ENCODE measurements at regions of chr10 and their contacts with region 1.

Region 1: GRCh38 chr10:25080880-25081581 is 64.6 kb downstream of the THNSL1 start:
- DNase-seq: peak; percentile 59
- H3K4me3 ChIP-seq: no peak overlapping the region
- H3K27ac ChIP-seq: no peak overlapping the region
- H3K27me3 ChIP-seq: no peaks in the 10 kb centered on the region
- CTCF ChIP-seq: peak; percentile 98

Region 2: DNA sequence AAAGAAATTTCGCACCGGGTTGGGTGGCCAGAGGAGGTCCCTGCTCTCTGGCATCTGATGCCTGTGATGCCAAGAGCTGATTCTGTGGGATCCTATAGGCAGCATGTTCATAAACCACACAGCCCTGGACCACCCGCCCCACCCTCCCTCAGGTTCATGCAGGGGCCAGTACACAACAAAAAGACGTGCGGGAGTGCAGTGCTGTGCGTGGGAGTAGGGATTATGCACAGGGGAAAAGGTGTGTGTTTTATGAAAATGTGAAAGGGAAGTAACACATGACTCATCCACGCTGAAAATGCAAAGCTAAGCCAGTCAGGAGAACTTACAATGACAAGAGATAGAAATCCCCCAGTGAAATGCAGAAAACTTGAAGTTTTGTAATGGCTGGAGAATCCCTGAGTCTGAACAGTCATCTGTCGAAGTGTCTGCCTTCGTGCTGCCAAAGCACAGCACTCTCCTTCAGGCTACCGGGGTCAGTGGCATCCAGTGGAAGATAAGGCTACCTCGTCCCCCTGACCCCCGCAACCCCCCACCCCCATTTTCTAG is 871.0 kb before region 1 on chr10:
- CTCF ChIA-PET with region 1: no interaction called
- POLR2A ChIA-PET with region 1: no interaction called
- DNase-seq: no peak
- H3K4me3 ChIP-seq: peak overlapping the region; percentile 59
- H3K27ac ChIP-seq: no peak overlapping the region
- H3K27me3 ChIP-seq: no peaks in the 10 kb centered on the region
- CTCF ChIP-seq: no peak

Region 3: GRCh38 chr10:24589265-24589664 is 491.8 kb before region 1 on chr10:
- CTCF ChIA-PET with region 1: interaction called, 10 read pairs
- POLR2A ChIA-PET with region 1: no interaction called
- DNase-seq: no peak
- H3K4me3 ChIP-seq: no peak overlapping the region
- H3K27ac ChIP-seq: no peak overlapping the region
- H3K27me3 ChIP-seq: no peaks in the 10 kb centered on the region
- CTCF ChIP-seq: no peak

Region 4: GRCh38 chr10:24603333-24603732 is 477.7 kb before region 1 on chr10:
- CTCF ChIA-PET with region 1: interaction called, 19 read pairs
- POLR2A ChIA-PET with region 1: no interaction called
- DNase-seq: no peak
- H3K4me3 ChIP-seq: no peak overlapping the region
- H3K27ac ChIP-seq: no peak overlapping the region
- H3K27me3 ChIP-seq: no peaks in the 10 kb centered on the region
- CTCF ChIP-seq: no peak

Region 5: GRCh38 chr10:24642622-24643417 is 438.2 kb before region 1 on chr10:
- CTCF ChIA-PET with region 1: interaction called, 47 read pairs
- POLR2A ChIA-PET with region 1: no interaction called
- DNase-seq: peak; percentile 61
- H3K4me3 ChIP-seq: no peak overlapping the region
- H3K27ac ChIP-seq: no peak overlapping the region
- H3K27me3 ChIP-seq: no peaks in the 10 kb centered on the region
- CTCF ChIP-seq: peak; percentile 79

Region 6: GRCh38 chr10:24685958-24686540 is 395.0 kb before region 1 on chr10:
- CTCF ChIA-PET with region 1: interaction called, 10 read pairs
- POLR2A ChIA-PET with region 1: no interaction called
- DNase-seq: peak; percentile 38
- H3K4me3 ChIP-seq: no peak overlapping the region
- H3K27ac ChIP-seq: no peak overlapping the region
- H3K27me3 ChIP-seq: no peaks in the 10 kb centered on the region
- CTCF ChIP-seq: no peak

Region 7: DNA sequence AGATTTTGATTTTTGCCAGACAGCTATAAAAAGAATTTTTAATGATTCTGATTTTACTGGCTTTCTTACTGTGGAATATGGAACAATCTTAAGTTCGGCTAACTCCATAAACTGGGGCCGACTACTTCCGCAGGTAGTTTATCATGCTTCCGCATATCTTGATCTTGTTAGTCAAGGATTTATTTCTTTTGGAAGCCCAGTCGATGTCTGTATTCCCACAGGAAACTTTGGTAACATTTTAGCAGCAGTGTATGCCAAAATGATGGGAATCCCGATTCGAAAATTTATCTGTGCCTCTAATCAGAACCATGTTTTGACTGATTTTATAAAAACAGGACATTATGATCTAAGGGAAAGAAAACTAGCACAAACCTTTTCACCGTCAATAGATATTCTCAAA is 56.5 kb before region 1 on chr10:
- CTCF ChIA-PET with region 1: interaction called, 12 read pairs
- POLR2A ChIA-PET with region 1: no interaction called
- DNase-seq: no peak
- H3K4me3 ChIP-seq: no peak overlapping the region
- H3K27ac ChIP-seq: no peak overlapping the region
- H3K27me3 ChIP-seq: no peaks in the 10 kb centered on the region
- CTCF ChIP-seq: no peak

Region 8: DNA sequence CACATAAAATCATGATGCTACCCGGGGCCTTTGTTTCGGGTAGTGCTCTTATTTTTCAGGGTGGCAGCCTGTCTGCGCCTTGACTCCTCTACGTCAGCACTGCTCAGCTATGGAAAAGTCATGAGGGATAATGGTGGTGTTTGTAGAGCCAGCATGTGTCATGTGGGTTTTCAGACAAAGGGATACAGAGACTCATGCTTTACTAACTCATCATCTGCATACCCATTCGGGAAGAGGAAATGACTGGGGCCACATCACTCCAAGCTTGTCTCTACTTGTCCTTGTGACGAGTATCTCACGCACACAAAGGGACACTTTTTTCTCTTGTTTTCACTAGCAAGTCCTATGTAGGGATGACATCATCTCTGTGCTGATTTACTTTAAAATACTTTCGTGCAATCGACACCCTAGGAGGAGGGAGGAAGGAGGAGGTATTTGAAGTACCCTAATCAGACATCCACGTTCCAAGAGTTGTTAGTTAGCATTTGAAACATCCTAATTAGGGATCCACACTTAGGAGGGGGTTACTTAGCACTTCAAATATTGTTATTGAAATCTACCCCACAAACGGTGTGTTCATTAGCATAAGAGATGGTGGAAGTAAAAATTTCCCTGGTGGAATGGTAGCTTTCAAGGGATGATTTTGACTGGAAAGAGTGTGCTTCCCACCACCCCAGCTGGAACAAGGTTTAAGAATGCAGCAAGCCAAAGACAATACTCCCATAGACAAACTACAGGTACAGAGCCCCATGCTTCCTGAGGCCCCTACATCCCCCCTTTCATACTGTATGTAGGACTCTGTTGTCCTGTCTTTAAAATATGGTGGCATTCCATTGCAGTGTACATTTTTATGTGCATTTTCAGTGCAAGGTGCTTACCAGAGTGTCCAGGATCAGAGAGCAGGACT is 12.6 kb before region 1 on chr10:
- CTCF ChIA-PET with region 1: interaction called, 34 read pairs
- POLR2A ChIA-PET with region 1: no interaction called
- DNase-seq: peak; percentile 11
- H3K4me3 ChIP-seq: no peak overlapping the region
- H3K27ac ChIP-seq: peak overlapping the region; percentile 3
- H3K27me3 ChIP-seq: no peaks in the 10 kb centered on the region
- CTCF ChIP-seq: no peak

Region 9: DNA sequence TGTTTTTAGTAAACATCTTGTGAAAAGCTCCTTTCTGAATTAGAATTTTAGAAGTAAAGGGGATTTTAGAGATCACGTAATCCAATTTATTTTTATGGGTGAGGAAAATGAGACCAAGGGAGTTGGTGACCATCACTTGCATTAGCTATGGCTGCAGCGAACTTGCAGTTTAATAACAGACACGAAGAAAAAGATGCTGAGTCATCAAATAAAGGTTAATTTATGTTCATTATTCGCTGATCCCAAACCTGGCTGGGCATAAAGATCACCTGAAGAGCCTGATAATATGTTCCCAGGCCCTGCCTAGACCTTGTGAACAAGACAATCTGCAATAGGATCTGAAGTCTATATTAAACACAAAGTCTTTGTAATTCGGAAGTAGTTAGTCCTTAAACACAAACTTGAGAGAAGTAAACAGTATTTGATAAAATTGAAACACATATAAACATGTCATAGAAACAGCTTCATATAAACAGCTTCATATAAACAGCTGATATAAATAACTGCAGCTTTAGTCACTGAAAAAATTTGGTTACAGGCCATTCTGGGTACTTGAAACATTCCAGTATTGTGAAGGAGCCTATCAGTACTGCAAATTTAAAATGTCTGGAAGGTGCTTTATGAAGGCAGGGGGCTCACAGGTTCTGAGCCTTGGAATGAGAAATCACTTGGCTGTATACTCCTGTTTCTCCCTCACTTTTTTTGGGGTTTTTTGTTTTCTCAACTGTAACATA is 110.3 kb after region 1 on chr10:
- CTCF ChIA-PET with region 1: no interaction called
- POLR2A ChIA-PET with region 1: no interaction called
- DNase-seq: no peak
- H3K4me3 ChIP-seq: no peak overlapping the region
- H3K27ac ChIP-seq: no peak overlapping the region
- H3K27me3 ChIP-seq: no peaks in the 10 kb centered on the region
- CTCF ChIP-seq: no peak

Measured in AG04450 (cell line).